Heart right ventricle (tissue), 16 donors: ENCODE measurements at regions of chr17 and their contacts with region 1.

Region 1: GRCh38 chr17:35242805-35243560 is at the start of gene SLFN5:
- DNase-seq: peak; percentile 94 to 95
- ATAC-seq: peak; percentile 95 to 98 (median 97)
- H3K4me3 ChIP-seq: peak within 1 kb of the TSS; percentile 47 to 95 (median 76)
- H3K27ac ChIP-seq: peak within 1 kb of the TSS; percentile 77 to 99 (median 96)
- H3K4me1 ChIP-seq: peaks cover 0 to 57% (median 29%) of the 10 kb centered on the region in 9 donors
- H3K27me3 ChIP-seq: no peaks in the 10 kb centered on the region
- CTCF ChIP-seq: peak in 1 of 9 donors; percentile 19
- total RNA-seq, gene SLFN5: 11.0 to 29.8 (median 15.9) TPM

Region 2: DNA sequence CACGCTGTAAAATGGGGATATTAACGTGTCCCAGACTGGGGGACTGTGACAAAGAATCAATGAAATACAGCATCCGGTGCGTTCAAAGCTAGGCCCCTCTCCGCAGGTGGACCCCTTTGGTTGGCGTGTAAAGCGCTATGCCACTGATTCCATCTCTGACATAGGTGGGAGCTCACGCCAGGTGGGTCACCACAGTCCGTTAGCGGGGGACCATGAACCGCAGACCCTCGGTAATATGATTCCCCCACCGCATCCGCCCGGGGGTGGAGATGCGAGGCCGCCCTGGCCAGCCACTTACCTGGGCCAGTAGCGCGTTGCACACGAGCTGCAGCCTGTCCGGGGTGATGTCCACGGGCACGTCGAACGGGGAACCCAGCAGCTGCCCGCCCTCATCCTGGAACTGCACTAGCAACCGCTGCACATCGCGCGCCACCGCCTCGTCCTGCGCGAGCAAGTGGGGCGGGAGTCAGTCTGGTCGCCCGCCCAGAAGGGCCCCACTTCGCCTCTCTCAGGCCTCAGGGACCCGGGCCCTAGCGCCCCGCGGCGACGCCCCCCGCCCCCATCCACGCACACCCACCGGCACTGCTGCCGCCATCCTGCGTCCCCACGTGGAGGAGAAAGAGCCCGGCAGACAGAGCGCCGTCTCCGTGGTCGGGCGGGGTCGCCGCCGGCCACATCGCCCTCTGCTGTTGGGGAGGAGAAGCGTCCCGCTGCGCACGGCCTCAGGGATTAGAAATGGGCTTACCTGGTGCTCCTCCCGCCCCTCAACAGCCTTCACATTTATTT is 101.1 kb before region 1 on chr17 and contains the start of gene NLE1:
- intact Hi-C with region 1: loop called in 2 of 10 experiments (anchors 5 kb)
- DNase-seq: peak; percentile 82 to 85
- ATAC-seq: peak; percentile 87 to 95 (median 89)
- H3K4me3 ChIP-seq: peak within 1 kb of the TSS; percentile 69 to 100 (median 85)
- H3K27ac ChIP-seq: peak within 1 kb of the TSS in 4 of 10 donors; percentile 15 to 52 (median 36)
- H3K4me1 ChIP-seq: peaks cover 1 to 29% (median 19%) of the 10 kb centered on the region in 9 donors
- H3K27me3 ChIP-seq: no peaks in the 10 kb centered on the region
- CTCF ChIP-seq: peak; percentile 88 to 98 (median 96)
- total RNA-seq, gene NLE1: 2.7 to 5.1 (median 4.2) TPM

Region 3: DNA sequence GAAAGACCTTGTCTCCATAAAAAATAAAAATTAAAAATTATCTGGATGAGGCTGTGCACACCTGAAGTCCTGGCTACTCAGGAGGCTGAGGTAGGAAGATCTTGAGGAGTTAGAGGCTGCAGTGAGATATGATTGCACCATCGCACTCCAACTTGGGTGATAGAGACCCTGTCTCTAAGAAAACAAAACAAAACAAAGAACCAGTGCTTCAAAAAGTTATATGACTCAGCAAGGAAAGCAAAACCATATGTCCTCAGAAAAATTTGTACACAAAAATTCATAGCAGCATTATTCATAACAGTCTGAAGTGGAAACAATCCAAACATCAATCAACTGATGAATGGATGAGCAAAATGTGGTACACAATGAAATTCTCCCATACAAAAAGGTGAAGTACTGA is 48.8 kb after region 1 on chr17:
- intact Hi-C with region 1: loop called in 1 of 10 experiments (anchors 10 kb)
- DNase-seq: no peak
- ATAC-seq: no peak
- H3K4me3 ChIP-seq: no peak overlapping the region
- H3K27ac ChIP-seq: no peak overlapping the region
- H3K4me1 ChIP-seq: peaks cover 0 to 6% (median 0%) of the 10 kb centered on the region in 9 donors
- H3K27me3 ChIP-seq: peaks cover 0 to 10% (median 0%) of the 10 kb centered on the region in 7 donors
- CTCF ChIP-seq: no peak

Region 4: DNA sequence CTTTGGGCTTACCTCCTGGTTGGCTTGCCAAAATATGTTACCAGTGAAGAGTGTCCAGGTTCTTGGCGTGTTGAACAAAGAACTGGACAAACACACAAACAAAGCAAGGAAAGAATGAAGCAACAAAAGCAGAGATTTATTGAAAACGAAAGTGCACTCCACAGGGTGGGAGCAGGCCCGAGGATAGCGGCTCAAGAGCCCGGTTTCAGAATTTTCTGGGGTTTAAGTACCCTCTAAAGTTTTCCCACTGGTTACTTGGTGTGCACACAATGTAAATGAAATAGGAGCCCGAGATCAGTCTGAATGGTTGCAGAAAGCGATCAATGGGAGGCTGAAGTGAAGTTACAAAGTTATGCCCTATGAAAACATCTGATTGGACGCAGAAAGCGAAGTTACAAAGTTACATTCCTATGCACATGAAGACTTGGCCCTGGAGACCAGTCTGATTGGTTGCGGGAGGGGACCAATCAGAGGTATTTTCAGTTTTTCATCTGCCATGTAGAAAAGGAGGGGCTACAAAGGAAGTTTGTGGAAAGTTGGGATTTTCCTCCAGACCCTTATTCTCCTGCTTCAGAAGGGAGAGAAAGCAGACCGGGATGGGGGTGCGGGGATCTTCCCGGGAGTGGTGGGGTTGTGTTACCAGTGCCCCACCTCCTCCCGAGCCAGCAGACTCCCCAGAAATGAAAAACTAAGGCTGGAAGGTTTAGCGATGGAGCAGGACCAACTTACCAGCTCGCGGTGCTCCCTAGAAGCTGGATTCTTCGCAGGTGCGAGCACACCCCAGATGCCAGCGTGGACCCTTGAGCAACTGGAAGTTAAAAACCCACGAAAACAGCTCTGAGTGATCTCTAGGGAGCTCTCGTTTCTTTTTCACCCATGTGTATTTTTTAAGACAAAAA is 189.4 kb after region 1 on chr17 and contains the start of gene SLFN12:
- intact Hi-C with region 1: loop called in 1 of 10 experiments (anchors 10 kb)
- DNase-seq: peak in 1 of 2 donors; percentile 79
- ATAC-seq: peak; percentile 87 to 96 (median 92)
- H3K4me3 ChIP-seq: peak within 1 kb of the TSS; percentile 50 to 73 (median 64)
- H3K27ac ChIP-seq: peak within 1 kb of the TSS; percentile 83 to 95 (median 92)
- H3K4me1 ChIP-seq: peaks cover 0 to 52% (median 27%) of the 10 kb centered on the region in 9 donors
- H3K27me3 ChIP-seq: peaks cover 0 to 2% (median 0%) of the 10 kb centered on the region in 7 donors
- CTCF ChIP-seq: no peak
- total RNA-seq, gene SLFN12: 2.0 to 7.8 (median 4.0) TPM

Region 5: GRCh38 chr17:35540589-35541404 is 297.8 kb after region 1 on chr17:
- intact Hi-C with region 1: loop called in 1 of 10 experiments (anchors 2 kb)
- DNase-seq: peak in 1 of 2 donors; percentile 35
- ATAC-seq: peak in 7 of 8 donors; percentile 39 to 70 (median 57)
- H3K4me3 ChIP-seq: peak overlapping the region in 9 of 10 donors; percentile 10 to 46 (median 42)
- H3K27ac ChIP-seq: peak overlapping the region; percentile 4 to 88 (median 71)
- H3K4me1 ChIP-seq: peaks cover 3 to 68% (median 39%) of the 10 kb centered on the region in 9 donors
- H3K27me3 ChIP-seq: no peaks in the 10 kb centered on the region
- CTCF ChIP-seq: no peak